ENCODE measurements at regions of chr16 and their contacts with region 1.

Region 1: GRCh38 chr16:239953-240287 is 5.3 kb downstream of the FAM234A start:
- DNase-seq: no peak
- H3K4me3 ChIP-seq: no peak overlapping the region
- H3K27ac ChIP-seq: peak overlapping the region; percentile 16 to 45 (median 23)
- H3K4me1 ChIP-seq: peaks cover 12 to 44% (median 21%) of the 10 kb centered on the region in 4 donors
- H3K27me3 ChIP-seq: no peaks in the 10 kb centered on the region
- CTCF ChIP-seq: no peak
- EP300 ChIP-seq: no peak
- POLR2A ChIP-seq: no peak

Region 2: GRCh38 chr16:149024-149662 is 90.8 kb before region 1 on chr16:
- in situ Hi-C with region 1: no loop called
- intact Hi-C with region 1: no loop called
- DNase-seq: no peak
- H3K4me3 ChIP-seq: no peak overlapping the region
- H3K27ac ChIP-seq: no peak overlapping the region
- H3K4me1 ChIP-seq: peaks cover 0 to under 1% (median under 1%) of the 10 kb centered on the region in 4 donors
- H3K27me3 ChIP-seq: peaks cover 42% of the 10 kb centered on the region
- CTCF ChIP-seq: no peak
- EP300 ChIP-seq: no peak
- POLR2A ChIP-seq: no peak

Region 3: GRCh38 chr16:352547-353403 is 112.9 kb after region 1 on chr16 and contains the start of gene AXIN1:
- in situ Hi-C with region 1: no loop called
- intact Hi-C with region 1: loop called (anchors 10 kb)
- DNase-seq: peak; percentile 100
- H3K4me3 ChIP-seq: peak within 1 kb of the TSS; percentile 65 to 94 (median 80)
- H3K27ac ChIP-seq: peak within 1 kb of the TSS; percentile 80 to 91 (median 85)
- H3K4me1 ChIP-seq: peaks cover 0 to 26% (median 22%) of the 10 kb centered on the region in 4 donors
- H3K27me3 ChIP-seq: no peaks in the 10 kb centered on the region
- CTCF ChIP-seq: peak in 3 of 5 experiments; percentile 47 to 62 (median 56)
- EP300 ChIP-seq: no peak
- POLR2A ChIP-seq: peak; percentile 85
- total RNA-seq, gene AXIN1: 41.4 to 73.7 (median 58.7) TPM